IMR-90 (cell line): ENCODE measurements at regions of chr2 and their contacts with region 1.

Region 1: GRCh38 chr2:168118733-168119514 is 128.5 kb downstream of the STK39 start:
- DNase-seq: peak; percentile 82
- ATAC-seq: peak; percentile 89
- H3K4me3 ChIP-seq: no peak overlapping the region
- H3K27ac ChIP-seq: peak overlapping the region; percentile 61; the same call in 1 of the 2 replicates
- H3K4me1 ChIP-seq: peaks cover 4% of the 10 kb centered on the region
- H3K27me3 ChIP-seq: no peaks in the 10 kb centered on the region
- CTCF ChIP-seq: peak; percentile 77
- POLR2A ChIP-seq: no peak
- RAD21 ChIP-seq: peak; percentile 76

Region 2: DNA sequence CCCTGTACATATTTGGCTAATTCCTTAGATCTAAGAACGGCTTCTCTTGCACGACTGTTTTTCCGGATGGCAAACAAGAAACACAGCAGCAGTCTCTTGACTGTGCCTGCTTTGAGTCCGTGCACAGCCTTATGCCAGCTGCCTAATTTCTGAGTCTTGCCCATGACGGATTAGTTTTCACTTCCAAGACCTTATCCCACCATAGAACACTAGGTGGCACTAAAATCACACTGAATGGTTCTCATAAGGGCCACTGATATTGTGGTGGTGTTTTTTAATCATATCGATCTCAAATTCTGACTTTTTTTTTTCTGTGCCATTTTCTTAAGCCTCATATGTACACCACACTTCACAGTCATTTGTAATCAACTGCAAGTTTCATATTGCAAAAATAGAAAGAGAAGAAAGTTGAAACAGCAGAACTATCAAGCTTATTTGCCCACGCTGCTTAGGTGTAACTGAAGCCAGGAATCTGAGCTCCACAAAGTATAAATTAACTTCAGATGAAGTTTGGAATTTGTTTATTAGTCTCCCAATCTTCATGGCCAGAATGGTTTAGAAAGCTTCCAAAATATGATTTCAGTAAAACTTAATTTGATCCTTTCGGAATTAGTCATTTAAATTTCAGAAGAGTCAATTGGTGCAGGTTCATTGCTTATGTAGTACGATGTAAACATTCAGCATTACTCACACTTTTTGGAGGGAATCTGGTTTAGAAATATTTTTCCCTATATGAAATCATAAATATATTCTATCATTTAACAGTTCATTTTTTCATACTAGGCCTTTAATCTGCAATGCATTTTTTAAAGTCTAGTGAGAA is 1579.4 kb before region 1 on chr2:
- CTCF ChIA-PET with region 1: interaction called, 3 read pairs
- POLR2A ChIA-PET with region 1: no interaction called
- dilution Hi-C with region 1: no loop called
- in situ Hi-C with region 1: loop called (anchors 10 kb)
- intact Hi-C with region 1: loop called (anchors 1 kb)
- DNase-seq: peak; percentile 84
- ATAC-seq: peak; percentile 97
- H3K4me3 ChIP-seq: 0 out of 2 replicates have a peak overlapping the region, but pooled peaks have one; percentile 4
- H3K27ac ChIP-seq: peak overlapping the region; percentile 37; the same call in 1 of the 2 replicates
- H3K4me1 ChIP-seq: no peaks in the 10 kb centered on the region
- H3K27me3 ChIP-seq: no peaks in the 10 kb centered on the region
- CTCF ChIP-seq: peak; percentile 90
- POLR2A ChIP-seq: peak; percentile 47; the same call in 1 of the 2 replicates
- RAD21 ChIP-seq: peak; percentile 96

Region 3: GRCh38 chr2:167212014-167212648 is 906.8 kb before region 1 on chr2:
- CTCF ChIA-PET with region 1: no interaction called
- POLR2A ChIA-PET with region 1: no interaction called
- dilution Hi-C with region 1: no loop called
- in situ Hi-C with region 1: no loop called
- intact Hi-C with region 1: loop called (anchors 2 kb)
- DNase-seq: peak; percentile 66
- ATAC-seq: peak; percentile 70
- H3K4me3 ChIP-seq: no peak overlapping the region
- H3K27ac ChIP-seq: no peak overlapping the region
- H3K4me1 ChIP-seq: no peaks in the 10 kb centered on the region
- H3K27me3 ChIP-seq: no peaks in the 10 kb centered on the region
- CTCF ChIP-seq: peak; percentile 77
- POLR2A ChIP-seq: no peak
- RAD21 ChIP-seq: peak; percentile 89

Region 4: GRCh38 chr2:167607211-167607610 is 511.7 kb before region 1 on chr2:
- CTCF ChIA-PET with region 1: no interaction called
- POLR2A ChIA-PET with region 1: no interaction called
- dilution Hi-C with region 1: no loop called
- in situ Hi-C with region 1: no loop called
- intact Hi-C with region 1: loop called (anchors 10 kb)
- DNase-seq: peak; percentile 1
- ATAC-seq: no peak; the same call in 1 of the 2 replicates
- H3K4me3 ChIP-seq: no peak overlapping the region
- H3K27ac ChIP-seq: no peak overlapping the region
- H3K4me1 ChIP-seq: no peaks in the 10 kb centered on the region
- H3K27me3 ChIP-seq: no peaks in the 10 kb centered on the region
- CTCF ChIP-seq: no peak
- POLR2A ChIP-seq: no peak
- RAD21 ChIP-seq: no peak

Region 5: GRCh38 chr2:167857416-167857815 is 261.5 kb before region 1 on chr2:
- CTCF ChIA-PET with region 1: no interaction called
- POLR2A ChIA-PET with region 1: no interaction called
- dilution Hi-C with region 1: no loop called
- in situ Hi-C with region 1: no loop called
- intact Hi-C with region 1: loop called (anchors 5 kb)
- DNase-seq: no peak
- ATAC-seq: no peak
- H3K4me3 ChIP-seq: no peak overlapping the region
- H3K27ac ChIP-seq: no peak overlapping the region
- H3K4me1 ChIP-seq: no peaks in the 10 kb centered on the region
- H3K27me3 ChIP-seq: no peaks in the 10 kb centered on the region
- CTCF ChIP-seq: no peak
- POLR2A ChIP-seq: no peak
- RAD21 ChIP-seq: no peak

Region 6: GRCh38 chr2:167964650-167965413 is 154.1 kb before region 1 on chr2:
- CTCF ChIA-PET with region 1: interaction called, 35 read pairs
- POLR2A ChIA-PET with region 1: interaction called, 16 read pairs
- dilution Hi-C with region 1: no loop called
- in situ Hi-C with region 1: loop called (anchors 5 kb)
- intact Hi-C with region 1: loop called (anchors 1 kb)
- DNase-seq: peak; percentile 18
- ATAC-seq: no peak
- H3K4me3 ChIP-seq: no peak overlapping the region
- H3K27ac ChIP-seq: peak overlapping the region; percentile 17; the same call in 1 of the 2 replicates
- H3K4me1 ChIP-seq: peaks cover 16% of the 10 kb centered on the region
- H3K27me3 ChIP-seq: no peaks in the 10 kb centered on the region
- CTCF ChIP-seq: peak; percentile 56
- POLR2A ChIP-seq: no peak
- RAD21 ChIP-seq: peak; percentile 47

Region 7: DNA sequence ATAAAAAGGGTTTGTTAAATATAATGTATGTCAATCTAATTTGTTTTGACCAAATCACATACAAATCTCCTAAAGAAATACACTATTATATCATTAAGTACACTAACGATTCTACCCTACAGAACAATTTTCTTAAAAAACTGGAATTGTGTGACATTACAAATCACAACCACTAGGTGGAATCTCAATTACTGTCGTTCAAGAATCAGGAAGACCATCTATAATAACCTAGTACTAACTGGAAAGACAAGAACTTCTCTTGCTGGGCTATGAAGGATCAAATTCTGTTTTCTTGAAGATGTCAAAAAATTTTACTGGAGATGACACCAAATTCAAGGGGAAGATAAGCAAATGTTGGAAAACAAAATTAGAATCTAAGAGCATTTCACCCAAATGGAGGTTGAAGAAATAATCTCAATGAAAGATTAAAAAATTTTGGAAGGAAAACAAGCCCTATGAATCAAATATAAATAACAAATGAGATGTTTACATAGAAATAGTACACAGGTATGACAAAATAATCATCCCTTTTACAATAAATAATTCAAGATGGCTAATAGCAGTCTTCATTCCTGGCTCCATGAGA is 17.6 kb after region 1 on chr2:
- CTCF ChIA-PET with region 1: no interaction called
- POLR2A ChIA-PET with region 1: no interaction called
- dilution Hi-C with region 1: no loop called
- in situ Hi-C with region 1: no loop called
- intact Hi-C with region 1: no loop called
- DNase-seq: peak; percentile 48
- ATAC-seq: 0 out of 2 replicates have a peak, but pooled peaks have one; percentile 36
- H3K4me3 ChIP-seq: no peak overlapping the region
- H3K27ac ChIP-seq: no peak overlapping the region
- H3K4me1 ChIP-seq: peaks cover 4% of the 10 kb centered on the region
- H3K27me3 ChIP-seq: no peaks in the 10 kb centered on the region
- CTCF ChIP-seq: peak; percentile 52
- POLR2A ChIP-seq: no peak
- RAD21 ChIP-seq: peak; percentile 47